Posterior vena cava (tissue), 2 donors: ENCODE measurements at regions of chr15 and their contacts with region 1.

Region 1: GRCh38 chr15:40344631-40345120 is 3.9 kb upstream of the CCDC9B start:
- DNase-seq: peak; percentile 84

Region 2: GRCh38 chr15:39202641-39203040 is 1142.0 kb before region 1 on chr15:
- intact Hi-C with region 1: loop called in 1 of 2 experiments (anchors 10 kb)
- DNase-seq: no peak

Region 3: GRCh38 chr15:40333922-40334492 is 10.7 kb before region 1 on chr15:
- intact Hi-C with region 1: no loop called
- DNase-seq: peak; percentile 91